ENCODE measurements at regions of chr7 and their contacts with region 1.

Region 1: DNA sequence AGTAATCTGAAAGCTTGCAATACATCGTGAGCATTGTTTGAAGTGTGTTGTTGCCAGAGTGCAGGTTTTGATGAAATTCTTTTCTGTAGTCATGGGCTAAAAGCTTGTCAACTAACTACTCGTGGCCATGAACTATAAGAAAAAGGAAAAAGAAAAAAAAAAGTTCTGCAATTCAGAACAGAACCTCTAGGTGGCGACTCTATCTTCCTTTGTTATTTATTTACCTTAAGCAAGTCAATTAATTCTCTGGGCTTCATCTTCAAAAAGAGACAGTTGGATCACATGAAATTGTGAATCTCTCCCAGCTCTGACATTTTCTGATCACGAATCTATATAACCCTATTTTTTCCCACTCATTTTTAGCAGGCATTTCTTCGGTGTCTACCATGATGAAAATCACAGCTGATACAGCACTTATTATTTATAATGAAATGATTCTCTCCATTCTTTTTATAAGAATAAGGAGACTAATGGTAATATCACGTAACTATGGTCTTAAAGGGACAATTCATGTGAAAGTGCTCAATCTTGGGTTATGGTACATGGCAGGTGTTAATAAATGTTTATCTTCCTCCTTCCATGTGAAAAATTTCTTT is 18.8 kb downstream of the TMEM196 start:
- DNase-seq: peak; percentile 88
- ATAC-seq: no peak
- H3K4me3 ChIP-seq: no peak overlapping the region
- H3K27ac ChIP-seq: no peak overlapping the region
- H3K4me1 ChIP-seq: peaks cover 6% of the 10 kb centered on the region; the same call in 1 of the 2 replicates
- H3K27me3 ChIP-seq: no peaks in the 10 kb centered on the region
- CTCF ChIP-seq: peak; percentile 82

Region 2: GRCh38 chr7:19572566-19572965 is 182.1 kb before region 1 on chr7:
- CTCF ChIA-PET with region 1: no interaction called
- POLR2A ChIA-PET with region 1: no interaction called
- intact Hi-C with region 1: no loop called
- DNase-seq: no peak
- ATAC-seq: no peak
- H3K4me3 ChIP-seq: no peak overlapping the region
- H3K27ac ChIP-seq: no peak overlapping the region
- H3K4me1 ChIP-seq: peaks cover 11% of the 10 kb centered on the region
- H3K27me3 ChIP-seq: no peaks in the 10 kb centered on the region
- CTCF ChIP-seq: no peak

Region 3: GRCh38 chr7:19869979-19870378 is 115.4 kb after region 1 on chr7:
- CTCF ChIA-PET with region 1: no interaction called
- POLR2A ChIA-PET with region 1: no interaction called
- intact Hi-C with region 1: no loop called
- DNase-seq: no peak
- ATAC-seq: no peak
- H3K4me3 ChIP-seq: no peak overlapping the region
- H3K27ac ChIP-seq: no peak overlapping the region
- H3K4me1 ChIP-seq: no peaks in the 10 kb centered on the region
- H3K27me3 ChIP-seq: no peaks in the 10 kb centered on the region
- CTCF ChIP-seq: no peak

Region 4: DNA sequence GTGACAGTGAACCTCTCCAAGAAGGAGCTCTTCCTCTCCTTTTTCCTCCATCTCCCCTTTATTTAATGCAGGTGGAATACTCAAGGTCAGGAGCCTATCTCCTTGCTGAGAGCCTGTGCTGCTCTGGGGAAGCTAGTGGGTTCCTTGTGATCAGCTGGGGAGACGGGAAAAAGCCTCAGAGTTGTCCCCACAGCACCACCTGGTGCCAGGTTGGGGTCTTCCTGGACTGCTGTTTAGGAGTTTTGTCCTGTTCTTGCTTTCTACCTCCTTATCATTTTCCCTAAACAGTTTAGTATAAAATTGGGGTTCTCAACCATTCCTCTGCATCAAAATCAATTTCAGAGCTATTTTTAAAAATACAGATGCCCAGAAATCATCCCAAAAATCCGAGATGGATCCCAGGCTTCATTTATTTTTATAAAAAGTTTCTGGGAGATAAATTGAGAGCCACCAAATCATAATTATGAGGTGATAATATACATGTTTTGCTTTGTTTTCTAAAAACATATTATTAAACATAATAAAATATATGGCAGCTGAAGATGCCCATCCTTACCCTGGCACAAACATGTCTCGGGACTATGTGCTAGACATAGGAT is 418.2 kb after region 1 on chr7:
- CTCF ChIA-PET with region 1: interaction called, 3 read pairs
- POLR2A ChIA-PET with region 1: interaction called, 3 read pairs
- intact Hi-C with region 1: loop called (anchors 2 kb)
- DNase-seq: peak; percentile 74
- ATAC-seq: peak; percentile 99
- H3K4me3 ChIP-seq: no peak overlapping the region
- H3K27ac ChIP-seq: no peak overlapping the region
- H3K4me1 ChIP-seq: no peaks in the 10 kb centered on the region
- H3K27me3 ChIP-seq: no peaks in the 10 kb centered on the region
- CTCF ChIP-seq: peak; percentile 77

Region 5: GRCh38 chr7:20407585-20408461 is 653.2 kb after region 1 on chr7:
- CTCF ChIA-PET with region 1: no interaction called
- POLR2A ChIA-PET with region 1: no interaction called
- intact Hi-C with region 1: loop called (anchors 5 kb)
- DNase-seq: peak; percentile 84
- ATAC-seq: peak; percentile 83
- H3K4me3 ChIP-seq: no peak overlapping the region
- H3K27ac ChIP-seq: peak overlapping the region; percentile 35
- H3K4me1 ChIP-seq: peaks cover 25% of the 10 kb centered on the region
- H3K27me3 ChIP-seq: no peaks in the 10 kb centered on the region
- CTCF ChIP-seq: no peak